ENCODE measurements at regions of chr1 and their contacts with region 1.

Region 1: GRCh38 chr1:117632269-117633067 is 26.6 kb downstream of the TENT5C start:
- DNase-seq: no peak
- H3K4me3 Mint-ChIP-seq: no peak overlapping the region
- H3K27ac Mint-ChIP-seq: no peak overlapping the region
- H3K4me1 Mint-ChIP-seq: peaks cover 14% of the 10 kb centered on the region
- H3K27me3 Mint-ChIP-seq: peaks cover 10% of the 10 kb centered on the region

Region 2: GRCh38 chr1:117618450-117619122 is 13.9 kb before region 1 on chr1:
- CTCF ChIA-PET with region 1: no interaction called
- intact Hi-C with region 1: loop called (anchors 2 kb)
- DNase-seq: no peak
- H3K4me3 Mint-ChIP-seq: no peak overlapping the region
- H3K27ac Mint-ChIP-seq: no peak overlapping the region
- H3K4me1 Mint-ChIP-seq: peaks cover 40% of the 10 kb centered on the region
- H3K27me3 Mint-ChIP-seq: peaks cover 3% of the 10 kb centered on the region

Region 3: DNA sequence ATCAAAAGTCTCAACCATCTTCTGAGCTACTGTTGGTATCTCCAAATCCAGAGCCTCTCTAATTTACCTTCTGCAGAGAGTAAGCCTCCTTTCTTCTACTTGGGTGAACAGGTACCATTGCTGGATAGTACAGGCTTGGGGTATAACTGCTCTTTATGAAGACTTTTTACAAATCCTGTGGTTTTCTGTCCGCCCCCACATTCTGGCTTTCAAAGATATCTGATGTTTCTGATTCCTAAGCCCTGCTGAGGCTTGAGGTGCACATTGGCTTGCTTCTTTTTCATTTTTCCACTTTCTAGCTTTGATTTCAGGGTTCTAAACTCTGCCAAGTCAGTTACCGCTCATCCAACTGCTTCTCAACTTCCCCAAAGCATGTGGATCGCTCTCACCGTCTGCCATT is 10.5 kb after region 1 on chr1:
- CTCF ChIA-PET with region 1: no interaction called
- intact Hi-C with region 1: loop called (anchors 1 kb)
- DNase-seq: peak; percentile 42
- H3K4me3 Mint-ChIP-seq: no peak overlapping the region
- H3K27ac Mint-ChIP-seq: no peak overlapping the region
- H3K4me1 Mint-ChIP-seq: no peaks in the 10 kb centered on the region
- H3K27me3 Mint-ChIP-seq: peaks cover 21% of the 10 kb centered on the region